ENCODE measurements at regions of chr6 and their contacts with region 1.

Region 1: GRCh38 chr6:27146706-27147505 is 100.6 kb upstream of the PRSS16 start:
- DNase-seq: peak; percentile 89 to 93
- H3K4me3 ChIP-seq: peak overlapping the region; percentile 60 to 86 (median 76)
- H3K27ac ChIP-seq: peak overlapping the region; percentile 98
- H3K4me1 ChIP-seq: peaks cover 0 to 11% (median 1%) of the 10 kb centered on the region in 4 experiments; a peak in 4 of 7 replicates
- H3K27me3 ChIP-seq: no peaks in the 10 kb centered on the region
- CTCF ChIP-seq: no peak
- EP300 ChIP-seq: 0 out of 3 replicates have a peak, but pooled peaks of 1 of the 2 experiments have one; percentile 16
- POLR2A ChIP-seq: peak; percentile 98 to 99
- RAD21 ChIP-seq: no peak

Region 2: GRCh38 chr6:26183581-26184366 is 963.1 kb before region 1 on chr6:
- CTCF ChIA-PET with region 1: no interaction called
- POLR2A ChIA-PET with region 1: interaction called, 45 read pairs
- DNase-seq: peak in 1 of 2 experiments; percentile 82
- H3K4me3 ChIP-seq: peak overlapping the region; percentile 45 to 73 (median 70)
- H3K27ac ChIP-seq: peak overlapping the region; percentile 97
- H3K4me1 ChIP-seq: peaks cover 0 to 17% (median 8%) of the 10 kb centered on the region in 4 experiments; a peak in 5 of 7 replicates
- H3K27me3 ChIP-seq: no peaks in the 10 kb centered on the region
- CTCF ChIP-seq: no peak
- EP300 ChIP-seq: no peak
- POLR2A ChIP-seq: peak; percentile 94 to 99
- RAD21 ChIP-seq: no peak

Region 3: DNA sequence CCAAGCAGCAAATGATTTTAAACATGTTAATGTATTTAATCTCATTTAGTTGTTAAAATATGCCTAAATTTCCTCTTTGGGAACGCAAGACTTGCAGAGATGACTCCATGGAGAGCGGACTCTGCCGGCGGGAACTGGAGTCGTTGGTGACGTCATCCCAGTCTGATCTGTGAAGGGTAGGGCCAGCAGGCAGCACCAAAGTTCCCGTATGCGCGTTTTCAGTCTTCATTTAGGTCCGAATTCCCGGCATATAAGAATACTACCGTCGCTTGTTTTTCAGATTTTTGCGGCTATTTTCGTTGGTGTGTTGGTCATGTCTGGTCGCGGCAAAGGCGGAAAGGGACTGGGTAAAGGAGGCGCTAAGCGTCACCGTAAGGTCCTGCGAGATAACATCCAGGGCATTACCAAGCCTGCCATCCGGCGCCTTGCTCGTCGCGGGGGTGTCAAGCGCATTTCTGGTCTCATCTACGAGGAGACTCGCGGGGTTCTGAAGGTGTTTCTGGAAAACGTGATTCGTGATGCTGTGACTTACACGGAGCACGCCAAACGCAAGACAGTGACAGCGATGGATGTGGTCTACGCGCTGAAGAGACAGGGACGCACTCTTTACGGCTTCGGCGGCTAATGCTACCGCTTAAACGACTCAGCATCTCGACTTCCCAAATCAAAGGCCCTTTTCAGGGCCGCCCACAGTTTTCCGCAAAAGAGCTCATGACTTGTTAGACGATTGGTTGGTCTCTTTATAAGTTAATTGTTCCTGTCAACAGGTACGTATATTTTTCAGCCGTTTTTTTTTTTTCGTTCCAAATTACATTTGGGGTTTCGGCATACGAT is 942.4 kb before region 1 on chr6:
- CTCF ChIA-PET with region 1: no interaction called
- POLR2A ChIA-PET with region 1: interaction called, 76 read pairs
- DNase-seq: peak; percentile 88 to 97
- H3K4me3 ChIP-seq: peak overlapping the region; percentile 64 to 94 (median 82)
- H3K27ac ChIP-seq: peak overlapping the region; percentile 98
- H3K4me1 ChIP-seq: peaks cover 0 to 15% (median 5%) of the 10 kb centered on the region in 4 experiments; a peak in 6 of 7 replicates
- H3K27me3 ChIP-seq: no peaks in the 10 kb centered on the region
- CTCF ChIP-seq: peak in 1 of 3 experiments; percentile 18; a peak in 1 of 4 replicates
- EP300 ChIP-seq: peak; percentile 13 to 95; a peak in 2 of 3 replicates
- POLR2A ChIP-seq: peak; percentile 99 to 100
- RAD21 ChIP-seq: 0 out of 4 replicates have a peak, but pooled peaks of 1 of the 2 experiments have one; percentile 14

Region 4: DNA sequence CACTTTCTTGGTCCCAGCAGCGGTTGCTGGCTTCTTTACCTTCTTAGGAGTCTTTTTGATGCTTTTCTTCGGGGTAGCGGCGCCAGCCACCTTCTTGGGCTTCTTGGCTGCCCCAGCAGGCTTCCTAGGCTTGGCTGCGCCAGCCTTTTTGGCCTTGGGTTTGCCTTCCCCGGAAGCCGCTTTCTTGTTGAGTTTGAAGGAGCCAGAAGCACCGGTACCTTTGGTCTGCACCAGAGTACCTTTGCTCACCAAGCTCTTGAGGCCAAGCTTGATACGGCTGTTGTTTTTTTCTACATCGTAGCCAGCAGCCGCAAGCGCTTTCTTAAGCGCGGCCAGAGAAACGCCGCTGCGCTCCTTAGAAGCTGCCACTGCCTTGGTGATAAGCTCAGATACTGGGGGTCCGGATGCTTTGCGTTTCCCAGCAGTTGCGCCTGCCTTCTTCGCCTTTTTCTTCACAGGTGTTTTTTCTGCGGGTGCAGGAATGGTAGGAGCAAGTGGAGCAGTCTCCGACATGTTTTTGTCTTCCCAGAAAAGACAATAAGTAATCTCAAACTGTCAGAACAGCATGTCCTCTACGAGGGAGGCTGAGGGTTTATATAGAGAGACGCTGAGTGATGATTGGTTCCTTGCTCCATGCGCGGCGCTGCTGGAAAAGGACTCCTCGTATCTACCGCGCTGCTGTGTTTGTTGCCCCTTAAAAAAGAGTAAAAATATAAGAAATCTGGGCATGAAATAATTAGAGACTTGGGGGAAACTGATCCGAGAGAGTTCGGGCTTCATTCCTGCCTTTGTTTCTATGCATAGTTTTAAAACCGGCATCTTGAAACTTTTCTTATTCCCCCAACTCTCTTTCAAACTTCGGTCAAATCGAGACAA is 912.2 kb before region 1 on chr6:
- CTCF ChIA-PET with region 1: no interaction called
- POLR2A ChIA-PET with region 1: interaction called, 46 read pairs
- DNase-seq: peak in 1 of 2 experiments; percentile 85
- H3K4me3 ChIP-seq: peak overlapping the region; percentile 83 to 91 (median 88)
- H3K27ac ChIP-seq: peak overlapping the region; percentile 93
- H3K4me1 ChIP-seq: peaks cover 0 to 3% (median 0%) of the 10 kb centered on the region in 4 experiments; a peak in 3 of 7 replicates
- H3K27me3 ChIP-seq: no peaks in the 10 kb centered on the region
- CTCF ChIP-seq: no peak
- EP300 ChIP-seq: no peak
- POLR2A ChIP-seq: peak; percentile 86
- RAD21 ChIP-seq: no peak

Region 5: DNA sequence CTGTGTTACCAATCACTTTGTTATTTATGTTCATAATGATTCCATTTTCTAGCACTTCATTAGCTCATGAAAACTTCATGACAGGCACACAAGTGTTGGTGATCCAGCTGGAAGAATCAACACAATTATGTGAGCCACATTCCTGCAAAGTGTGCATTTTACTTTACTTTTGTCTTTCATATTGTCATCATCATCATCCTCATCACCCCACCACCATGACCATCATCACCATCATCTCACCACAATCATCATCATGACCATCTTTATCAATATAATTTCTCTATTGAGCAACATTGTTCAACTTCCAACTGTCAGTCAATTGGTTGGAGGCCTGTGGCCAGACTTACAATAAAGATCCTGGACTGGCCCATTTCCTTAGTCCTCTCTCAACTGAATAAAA is 58.8 kb before region 1 on chr6:
- CTCF ChIA-PET with region 1: no interaction called
- POLR2A ChIA-PET with region 1: no interaction called
- DNase-seq: no peak
- H3K4me3 ChIP-seq: no peak overlapping the region
- H3K27ac ChIP-seq: no peak overlapping the region
- H3K4me1 ChIP-seq: no peaks in the 10 kb centered on the region
- H3K27me3 ChIP-seq: no peaks in the 10 kb centered on the region
- CTCF ChIP-seq: no peak
- EP300 ChIP-seq: no peak
- POLR2A ChIP-seq: no peak
- RAD21 ChIP-seq: no peak

Region 6: GRCh38 chr6:27168108-27168507 is 21.2 kb after region 1 on chr6:
- CTCF ChIA-PET with region 1: interaction called, 11 read pairs
- POLR2A ChIA-PET with region 1: interaction called, 26 read pairs
- DNase-seq: no peak
- H3K4me3 ChIP-seq: no peak overlapping the region
- H3K27ac ChIP-seq: no peak overlapping the region
- H3K4me1 ChIP-seq: no peaks in the 10 kb centered on the region
- H3K27me3 ChIP-seq: no peaks in the 10 kb centered on the region
- CTCF ChIP-seq: no peak
- EP300 ChIP-seq: no peak
- POLR2A ChIP-seq: no peak
- RAD21 ChIP-seq: no peak

Region 7: GRCh38 chr6:27374824-27375612 is 228.1 kb after region 1 on chr6:
- CTCF ChIA-PET with region 1: no interaction called
- POLR2A ChIA-PET with region 1: no interaction called
- DNase-seq: peak; percentile 66 to 85
- H3K4me3 ChIP-seq: peak overlapping the region; percentile 77 to 94 (median 83)
- H3K27ac ChIP-seq: no peak overlapping the region
- H3K4me1 ChIP-seq: peaks cover 0 to 8% (median 5%) of the 10 kb centered on the region in 4 experiments; a peak in 3 of 7 replicates
- H3K27me3 ChIP-seq: no peaks in the 10 kb centered on the region
- CTCF ChIP-seq: no peak
- EP300 ChIP-seq: no peak
- POLR2A ChIP-seq: peak in 1 of 2 experiments; percentile 40; a peak in 1 of 3 replicates
- RAD21 ChIP-seq: no peak

Region 8: DNA sequence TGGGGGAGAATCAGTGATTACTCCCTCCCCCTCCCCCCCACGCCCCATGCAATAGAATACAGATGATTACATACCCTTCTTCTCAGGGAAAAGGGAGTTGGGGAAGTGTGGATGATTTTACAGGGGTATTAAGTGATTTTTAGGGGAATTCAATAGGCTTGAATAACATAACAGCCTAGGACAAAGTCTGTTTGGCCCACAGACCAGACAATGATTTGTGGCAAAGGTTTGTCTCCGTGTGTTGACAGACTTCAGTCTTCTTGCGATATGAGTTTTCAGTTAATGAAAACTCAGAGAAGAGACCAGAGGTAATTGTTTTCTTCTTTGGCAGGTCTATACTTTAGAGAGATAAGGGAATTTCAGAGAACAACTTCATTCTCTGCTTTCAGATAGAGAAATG is 670.0 kb after region 1 on chr6:
- CTCF ChIA-PET with region 1: no interaction called
- POLR2A ChIA-PET with region 1: interaction called, 587 read pairs
- DNase-seq: peak in 1 of 2 experiments; percentile 39
- H3K4me3 ChIP-seq: no peak overlapping the region
- H3K27ac ChIP-seq: no peak overlapping the region
- H3K4me1 ChIP-seq: peaks cover 0 to 4% (median 1%) of the 10 kb centered on the region in 4 experiments; a peak in 3 of 7 replicates
- H3K27me3 ChIP-seq: no peaks in the 10 kb centered on the region
- CTCF ChIP-seq: no peak
- EP300 ChIP-seq: no peak
- POLR2A ChIP-seq: no peak
- RAD21 ChIP-seq: no peak

Region 9: DNA sequence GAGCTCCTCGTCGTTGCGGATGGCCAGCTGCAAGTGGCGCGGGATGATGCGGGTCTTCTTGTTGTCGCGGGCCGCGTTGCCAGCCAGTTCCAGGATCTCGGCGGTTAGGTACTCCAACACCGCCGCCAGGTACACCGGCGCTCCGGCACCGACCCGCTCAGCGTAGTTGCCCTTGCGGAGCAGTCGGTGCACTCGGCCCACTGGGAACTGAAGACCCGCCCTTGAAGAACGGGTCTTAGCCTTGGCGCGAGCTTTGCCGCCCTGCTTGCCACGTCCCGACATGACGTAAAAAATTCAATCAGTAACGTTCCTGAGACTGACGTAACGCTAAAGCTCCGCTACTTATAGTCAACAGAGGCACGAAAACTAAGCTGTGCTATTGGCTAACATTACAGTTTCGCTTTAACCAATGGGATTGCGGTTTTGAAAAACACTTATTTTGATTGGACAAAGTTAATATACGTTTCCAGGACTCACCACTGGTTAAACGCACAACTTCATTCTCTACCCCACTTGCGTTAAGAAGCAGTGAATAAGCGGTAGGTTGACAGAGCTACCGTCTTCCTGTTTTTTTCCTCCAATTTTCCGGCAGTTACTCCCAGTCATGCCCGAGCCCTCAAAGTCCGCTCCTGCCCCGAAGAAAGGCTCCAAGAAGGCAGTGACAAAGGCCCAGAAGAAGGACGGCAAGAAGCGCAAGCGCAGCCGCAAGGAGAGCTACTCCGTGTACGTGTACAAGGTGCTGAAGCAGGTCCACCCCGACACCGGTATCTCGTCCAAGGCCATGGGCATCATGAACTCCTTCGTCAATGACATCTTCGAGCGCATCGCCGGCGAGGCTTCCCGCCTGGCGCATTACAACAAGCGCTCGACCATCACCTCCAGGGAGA is 691.4 kb after region 1 on chr6:
- CTCF ChIA-PET with region 1: no interaction called
- POLR2A ChIA-PET with region 1: interaction called, 106 read pairs
- DNase-seq: peak; percentile 76 to 87
- H3K4me3 ChIP-seq: peak overlapping the region; percentile 77 to 96 (median 93)
- H3K27ac ChIP-seq: peak overlapping the region; percentile 98
- H3K4me1 ChIP-seq: peaks cover 0 to 5% (median 2%) of the 10 kb centered on the region in 4 experiments; a peak in 1 of 7 replicates
- H3K27me3 ChIP-seq: no peaks in the 10 kb centered on the region
- CTCF ChIP-seq: no peak
- EP300 ChIP-seq: no peak
- POLR2A ChIP-seq: peak; percentile 88 to 91
- RAD21 ChIP-seq: no peak